Naive thymus-derived CD4-positive, alpha-beta T cell (primary cell): ENCODE measurements at regions of chr13 and their contacts with region 1.

Region 1: GRCh38 chr13:39263033-39263432 is 224.8 kb downstream of the NHLRC3 start:
- DNase-seq: peak in 3 of 9 donors; percentile 1 to 36 (median 11)
- ATAC-seq: peak; percentile 38
- H3K4me3 ChIP-seq: no peak overlapping the region
- H3K4me3 Mint-ChIP-seq: no peak overlapping the region
- H3K27ac ChIP-seq: no peak overlapping the region
- H3K27ac Mint-ChIP-seq: no peak overlapping the region
- H3K4me1 ChIP-seq: no peaks in the 10 kb centered on the region
- H3K4me1 Mint-ChIP-seq: peaks cover 0 to 15% (median 0%) of the 10 kb centered on the region in 7 donors
- H3K27me3 ChIP-seq: no peaks in the 10 kb centered on the region
- H3K27me3 Mint-ChIP-seq: peaks cover 0 to 17% (median 4%) of the 10 kb centered on the region in 5 donors

Region 2: GRCh38 chr13:38686577-38687245 is 576.3 kb before region 1 on chr13 and contains the start of gene FREM2:
- CTCF ChIA-PET with region 1: no interaction called
- POLR2A ChIA-PET with region 1: no interaction called
- intact Hi-C with region 1: no loop called
- DNase-seq: no peak
- ATAC-seq: no peak
- H3K4me3 ChIP-seq: no peak within 1 kb of the TSS
- H3K4me3 Mint-ChIP-seq: peak within 1 kb of the TSS in 4 of 10 donors; percentile 0 to 33 (median 6)
- H3K27ac ChIP-seq: no peak within 1 kb of the TSS
- H3K27ac Mint-ChIP-seq: no peak within 1 kb of the TSS
- H3K4me1 ChIP-seq: no peaks in the 10 kb centered on the region
- H3K4me1 Mint-ChIP-seq: peaks cover 0 to 9% (median 4%) of the 10 kb centered on the region in 7 donors
- H3K27me3 ChIP-seq: no peaks in the 10 kb centered on the region
- H3K27me3 Mint-ChIP-seq: peaks cover 11 to 27% (median 20%) of the 10 kb centered on the region in 5 donors
- total RNA-seq, gene FREM2: 0.12 TPM in 1 of 5 experiments, not detected in the others

Region 3: GRCh38 chr13:39051157-39051556 is 211.9 kb before region 1 on chr13:
- CTCF ChIA-PET with region 1: no interaction called
- POLR2A ChIA-PET with region 1: no interaction called
- intact Hi-C with region 1: loop called (anchors 1 kb)
- DNase-seq: peak in 5 of 9 donors; percentile 11 to 38 (median 22)
- ATAC-seq: peak; percentile 51
- H3K4me3 ChIP-seq: no peak overlapping the region
- H3K4me3 Mint-ChIP-seq: no peak overlapping the region
- H3K27ac ChIP-seq: no peak overlapping the region
- H3K27ac Mint-ChIP-seq: peak overlapping the region in 1 of 9 donors; percentile 20
- H3K4me1 ChIP-seq: no peaks in the 10 kb centered on the region
- H3K4me1 Mint-ChIP-seq: peaks cover 0 to 13% (median 7%) of the 10 kb centered on the region in 7 donors
- H3K27me3 ChIP-seq: no peaks in the 10 kb centered on the region
- H3K27me3 Mint-ChIP-seq: no peaks in the 10 kb centered on the region

Region 4: DNA sequence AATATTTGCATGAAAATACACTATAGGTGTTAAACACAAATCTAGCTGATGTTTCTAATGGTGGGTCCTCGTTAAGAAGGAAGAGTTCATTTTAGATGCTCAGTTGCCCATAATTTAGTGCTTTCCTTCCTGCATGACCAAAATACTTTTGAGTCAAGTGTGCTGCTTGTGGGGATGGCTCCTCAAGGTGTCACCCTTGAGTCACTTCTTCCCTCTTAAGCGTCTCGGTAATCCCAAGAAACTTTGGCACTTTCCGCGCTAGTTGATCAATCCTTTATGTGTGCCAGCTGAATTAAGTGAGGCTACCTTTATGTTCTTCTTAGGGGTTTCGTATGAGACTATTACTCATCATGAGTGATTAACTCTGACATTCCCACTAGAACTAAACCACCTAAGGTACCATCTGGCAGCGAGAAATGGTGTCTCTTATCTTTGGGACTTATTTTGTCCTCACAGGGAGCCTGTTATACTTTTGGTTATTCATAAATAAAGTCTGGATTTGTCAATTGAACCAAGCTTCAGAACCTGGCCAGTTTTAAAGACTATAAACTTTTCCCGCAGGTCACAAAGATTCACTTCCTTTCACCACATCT is 118.0 kb before region 1 on chr13:
- CTCF ChIA-PET with region 1: no interaction called
- POLR2A ChIA-PET with region 1: no interaction called
- intact Hi-C with region 1: loop called in 1 of 2 experiments (anchors 1 kb)
- DNase-seq: peak in 1 of 9 donors; percentile 1
- ATAC-seq: no peak
- H3K4me3 ChIP-seq: no peak overlapping the region
- H3K4me3 Mint-ChIP-seq: no peak overlapping the region
- H3K27ac ChIP-seq: no peak overlapping the region
- H3K27ac Mint-ChIP-seq: no peak overlapping the region
- H3K4me1 ChIP-seq: no peaks in the 10 kb centered on the region
- H3K4me1 Mint-ChIP-seq: peaks cover 0 to 5% (median 0%) of the 10 kb centered on the region in 7 donors
- H3K27me3 ChIP-seq: no peaks in the 10 kb centered on the region
- H3K27me3 Mint-ChIP-seq: peaks cover 24 to 55% (median 39%) of the 10 kb centered on the region in 5 donors

Region 5: GRCh38 chr13:39692660-39693438 is 429.8 kb after region 1 on chr13:
- CTCF ChIA-PET with region 1: no interaction called
- POLR2A ChIA-PET with region 1: no interaction called
- intact Hi-C with region 1: no loop called
- DNase-seq: no peak
- ATAC-seq: no peak
- H3K4me3 ChIP-seq: no peak overlapping the region
- H3K4me3 Mint-ChIP-seq: no peak overlapping the region
- H3K27ac ChIP-seq: no peak overlapping the region
- H3K27ac Mint-ChIP-seq: no peak overlapping the region
- H3K4me1 ChIP-seq: no peaks in the 10 kb centered on the region
- H3K4me1 Mint-ChIP-seq: peaks cover 0 to 19% (median 0%) of the 10 kb centered on the region in 7 donors
- H3K27me3 ChIP-seq: no peaks in the 10 kb centered on the region
- H3K27me3 Mint-ChIP-seq: no peaks in the 10 kb centered on the region